A673 (cell line): ENCODE measurements at regions of chr14 and their contacts with region 1.

Region 1: GRCh38 chr14:42884100-42884499 is 1277.4 kb downstream of the LRFN5 start:
- DNase-seq: peak; percentile 70
- H3K4me3 ChIP-seq: no peak overlapping the region
- H3K27ac ChIP-seq: no peak overlapping the region
- H3K4me1 ChIP-seq: peaks cover 6% of the 10 kb centered on the region
- H3K27me3 ChIP-seq: no peaks in the 10 kb centered on the region
- CTCF ChIP-seq: no peak

Region 2: GRCh38 chr14:41623736-41624135 is 1260.4 kb before region 1 on chr14:
- CTCF ChIA-PET with region 1: no interaction called
- POLR2A ChIA-PET with region 1: no interaction called
- intact Hi-C with region 1: loop called (anchors 10 kb)
- DNase-seq: peak; percentile 72
- H3K4me3 ChIP-seq: peak overlapping the region; percentile 4
- H3K27ac ChIP-seq: peak overlapping the region; percentile 79
- H3K4me1 ChIP-seq: peaks cover 85% of the 10 kb centered on the region
- H3K27me3 ChIP-seq: no peaks in the 10 kb centered on the region
- CTCF ChIP-seq: no peak

Region 3: GRCh38 chr14:42556551-42556950 is 327.5 kb before region 1 on chr14:
- CTCF ChIA-PET with region 1: no interaction called
- POLR2A ChIA-PET with region 1: no interaction called
- intact Hi-C with region 1: no loop called
- DNase-seq: no peak
- H3K4me3 ChIP-seq: no peak overlapping the region
- H3K27ac ChIP-seq: no peak overlapping the region
- H3K4me1 ChIP-seq: no peaks in the 10 kb centered on the region
- H3K27me3 ChIP-seq: no peaks in the 10 kb centered on the region
- CTCF ChIP-seq: no peak